ENCODE measurements at regions of chr5 and their contacts with region 1.

Region 1: GRCh38 chr5:141701360-141702119 is 19.5 kb upstream of the ARAP3 start:
- DNase-seq: peak in 1 of 2 donors; percentile 42
- ATAC-seq: peak in 5 of 8 donors; percentile 34 to 64 (median 45)
- H3K4me3 ChIP-seq: peak overlapping the region in 9 of 10 donors; percentile 39 to 69 (median 58)
- H3K27ac ChIP-seq: peak overlapping the region in 4 of 10 donors; percentile 16 to 66 (median 32)
- H3K4me1 ChIP-seq: peaks cover 3 to 24% (median 16%) of the 10 kb centered on the region in 9 donors
- H3K27me3 ChIP-seq: peaks cover 0 to 72% (median 22%) of the 10 kb centered on the region in 7 donors
- CTCF ChIP-seq: no peak

Region 2: GRCh38 chr5:141757402-141757801 is 55.9 kb after region 1 on chr5:
- intact Hi-C with region 1: loop called in 2 of 10 experiments (anchors 5 to 10 kb)
- DNase-seq: peak in 1 of 2 donors; percentile 23
- ATAC-seq: peak in 6 of 8 donors; percentile 23 to 58 (median 50)
- H3K4me3 ChIP-seq: no peak overlapping the region
- H3K27ac ChIP-seq: no peak overlapping the region
- H3K4me1 ChIP-seq: peaks cover 2 to 28% (median 14%) of the 10 kb centered on the region in 9 donors
- H3K27me3 ChIP-seq: peaks cover 0 to 49% (median 42%) of the 10 kb centered on the region in 7 donors
- CTCF ChIP-seq: peak in 8 of 9 donors; percentile 5 to 46 (median 34)

Region 3: GRCh38 chr5:141811287-141812155 is 110.0 kb after region 1 on chr5:
- intact Hi-C with region 1: loop called in 8 of 10 experiments (anchors 2 to 10 kb)
- DNase-seq: no peak
- ATAC-seq: no peak
- H3K4me3 ChIP-seq: no peak overlapping the region
- H3K27ac ChIP-seq: peak overlapping the region in 2 of 10 donors; percentile 4 to 91
- H3K4me1 ChIP-seq: peaks cover 10 to 81% (median 40%) of the 10 kb centered on the region in 9 donors
- H3K27me3 ChIP-seq: peaks cover 0 to 41% (median 15%) of the 10 kb centered on the region in 7 donors
- CTCF ChIP-seq: peak in 8 of 9 donors; percentile 23 to 66 (median 58)

Region 4: GRCh38 chr5:141960449-141961202 is 259.1 kb after region 1 on chr5:
- intact Hi-C with region 1: loop called in 1 of 10 experiments (anchors 2 kb)
- DNase-seq: peak; percentile 86 to 92
- ATAC-seq: peak; percentile 78 to 87 (median 82)
- H3K4me3 ChIP-seq: no peak overlapping the region
- H3K27ac ChIP-seq: peak overlapping the region in 8 of 10 donors; percentile 36 to 89 (median 82)
- H3K4me1 ChIP-seq: peaks cover 5 to 55% (median 41%) of the 10 kb centered on the region in 9 donors
- H3K27me3 ChIP-seq: no peaks in the 10 kb centered on the region
- CTCF ChIP-seq: peak; percentile 86 to 95 (median 91)

Measured in heart right ventricle (tissue), 16 donors.